AG04450 (cell line): ENCODE measurements at regions of chr7 and their contacts with region 1.

Region 1: GRCh38 chr7:129163875-129164544 is 19.5 kb downstream of the TSPAN33 start:
- DNase-seq: peak; percentile 48
- H3K4me3 ChIP-seq: no peak overlapping the region
- H3K27ac ChIP-seq: no peak overlapping the region
- H3K27me3 ChIP-seq: peaks cover 19% of the 10 kb centered on the region
- CTCF ChIP-seq: peak; percentile 83

Region 2: GRCh38 chr7:129041142-129042085 is 122.6 kb before region 1 on chr7:
- CTCF ChIA-PET with region 1: no interaction called
- POLR2A ChIA-PET with region 1: no interaction called
- DNase-seq: no peak
- H3K4me3 ChIP-seq: no peak overlapping the region
- H3K27ac ChIP-seq: no peak overlapping the region
- H3K27me3 ChIP-seq: no peaks in the 10 kb centered on the region
- CTCF ChIP-seq: no peak

Region 3: DNA sequence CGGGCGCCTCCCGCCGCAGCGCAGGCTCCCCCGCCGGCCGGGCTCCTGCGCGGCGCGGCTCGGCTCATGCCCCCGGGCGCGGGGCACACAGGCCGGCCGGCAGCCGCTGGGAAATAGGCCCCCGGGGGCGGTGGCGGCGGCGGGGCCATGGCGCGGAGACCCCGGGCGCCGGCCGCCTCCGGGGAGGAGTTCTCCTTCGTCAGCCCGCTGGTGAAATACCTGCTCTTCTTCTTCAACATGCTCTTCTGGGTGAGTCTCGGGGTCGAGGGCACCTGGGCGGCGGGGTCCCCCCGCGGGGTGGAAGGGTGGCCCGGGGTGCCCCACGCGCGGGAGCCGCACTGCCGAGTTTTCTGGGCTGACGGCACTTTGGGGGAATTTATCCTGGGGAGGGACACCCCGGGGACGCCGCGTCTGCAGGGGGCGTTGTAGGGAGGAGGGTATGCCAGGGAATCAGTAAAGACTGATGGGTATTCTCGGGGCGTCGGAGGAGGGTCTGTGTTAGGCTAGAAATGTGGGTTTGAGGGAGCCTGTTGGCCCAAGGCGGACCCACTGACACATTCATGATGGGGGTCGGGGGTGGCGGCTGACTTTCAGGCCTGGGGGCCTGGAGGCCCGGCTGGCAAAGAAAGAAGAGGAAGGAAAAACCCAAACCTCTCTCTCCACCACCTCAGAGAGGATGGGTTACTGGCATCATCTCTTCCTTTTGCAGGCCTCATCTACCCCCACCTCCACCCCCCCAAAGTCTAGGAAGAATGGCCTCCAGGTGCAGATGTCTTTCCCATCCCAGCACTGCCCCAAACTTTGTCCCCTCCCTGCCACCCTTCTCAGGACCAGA is 19.0 kb before region 1 on chr7:
- CTCF ChIA-PET with region 1: interaction called, 21 read pairs
- POLR2A ChIA-PET with region 1: no interaction called
- DNase-seq: no peak
- H3K4me3 ChIP-seq: peak overlapping the region; percentile 36
- H3K27ac ChIP-seq: no peak overlapping the region
- H3K27me3 ChIP-seq: peaks cover 59% of the 10 kb centered on the region
- CTCF ChIP-seq: peak; percentile 22; the same call in 1 of the 2 replicates

Region 4: GRCh38 chr7:129188372-129188891 is 24.4 kb after region 1 on chr7 and contains the start of gene SMO:
- CTCF ChIA-PET with region 1: interaction called, 15 read pairs
- POLR2A ChIA-PET with region 1: interaction called, 3 read pairs
- DNase-seq: no peak
- H3K4me3 ChIP-seq: peak within 1 kb of the TSS; percentile 82
- H3K27ac ChIP-seq: peak within 1 kb of the TSS; percentile 39
- H3K27me3 ChIP-seq: peaks cover 5% of the 10 kb centered on the region
- CTCF ChIP-seq: no peak
- polyA plus RNA-seq, gene SMO: 20.8 and 26.5 TPM in 2 replicates

Region 5: GRCh38 chr7:129202058-129202777 is 38.2 kb after region 1 on chr7:
- CTCF ChIA-PET with region 1: interaction called, 188 read pairs
- POLR2A ChIA-PET with region 1: no interaction called
- DNase-seq: no peak
- H3K4me3 ChIP-seq: no peak overlapping the region
- H3K27ac ChIP-seq: no peak overlapping the region
- H3K27me3 ChIP-seq: no peaks in the 10 kb centered on the region
- CTCF ChIP-seq: no peak

Region 6: GRCh38 chr7:129394982-129395914 is 231.2 kb after region 1 on chr7:
- CTCF ChIA-PET with region 1: no interaction called
- POLR2A ChIA-PET with region 1: no interaction called
- DNase-seq: no peak
- H3K4me3 ChIP-seq: no peak overlapping the region
- H3K27ac ChIP-seq: no peak overlapping the region
- H3K27me3 ChIP-seq: no peaks in the 10 kb centered on the region
- CTCF ChIP-seq: no peak

Region 7: DNA sequence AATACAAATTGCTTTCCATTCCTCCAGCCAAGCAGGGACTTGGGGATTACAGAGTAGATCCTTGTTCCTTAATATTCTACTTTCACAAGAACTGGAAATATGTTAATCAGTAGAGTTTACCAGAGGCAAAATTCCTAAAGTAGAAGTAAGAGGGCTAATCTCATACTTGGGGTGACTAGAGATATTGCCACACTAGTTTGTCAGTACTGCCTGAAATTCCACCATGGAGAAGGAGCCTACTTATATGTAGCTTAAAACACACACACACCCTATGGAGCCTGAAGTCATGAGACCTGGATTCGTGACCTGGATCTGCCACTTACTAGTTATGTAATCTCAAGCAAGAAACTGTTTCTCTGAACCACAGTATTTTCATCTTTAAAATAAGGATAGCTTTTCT is 304.1 kb after region 1 on chr7:
- CTCF ChIA-PET with region 1: interaction called, 14 read pairs
- POLR2A ChIA-PET with region 1: no interaction called
- DNase-seq: peak; percentile 10
- H3K4me3 ChIP-seq: no peak overlapping the region
- H3K27ac ChIP-seq: no peak overlapping the region
- H3K27me3 ChIP-seq: no peaks in the 10 kb centered on the region
- CTCF ChIP-seq: no peak